Heart left ventricle (tissue), 16 donors: ENCODE measurements at regions of chr7 and their contacts with region 1.

Region 1: DNA sequence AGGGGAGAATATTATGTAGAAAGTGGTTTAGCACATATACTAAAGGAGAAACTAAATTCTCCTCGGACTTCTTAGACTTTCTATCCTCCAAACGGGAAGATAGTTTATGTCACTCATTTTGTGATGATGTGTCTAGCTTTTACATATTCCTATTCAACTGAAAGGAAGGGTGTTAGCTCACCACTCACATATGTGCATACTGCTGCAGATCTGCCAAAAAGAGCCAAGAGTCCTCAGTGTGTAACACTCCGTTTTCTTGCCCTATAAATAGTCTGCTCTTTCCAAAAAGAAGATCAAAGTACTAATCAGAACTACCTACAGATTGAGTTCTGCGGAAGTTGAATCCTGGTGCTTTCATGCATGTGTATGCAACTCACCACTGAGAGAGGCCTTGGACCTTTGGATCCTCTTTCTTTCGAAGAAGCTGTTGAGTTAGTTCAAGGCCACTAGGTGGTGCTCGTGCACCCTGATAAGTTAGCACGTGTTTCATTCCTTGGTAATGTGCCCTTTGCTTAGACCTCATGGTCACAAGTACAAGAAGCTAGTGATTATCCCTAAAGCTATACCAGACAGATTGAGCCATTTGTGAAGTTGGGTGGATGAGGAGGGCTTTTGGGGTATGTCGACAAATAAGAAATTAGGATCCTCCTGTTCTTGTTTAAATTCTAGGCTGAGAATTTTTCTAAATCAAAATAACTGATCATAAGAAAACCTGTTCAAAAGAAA is 14.1 kb downstream of the YAE1 start:
- DNase-seq: peak; percentile 67 to 84 (median 75)
- ATAC-seq: peak; percentile 74 to 95 (median 92)
- H3K4me3 ChIP-seq: no peak overlapping the region
- H3K27ac ChIP-seq: no peak overlapping the region
- H3K4me1 ChIP-seq: peaks cover 0 to 4% (median 0%) of the 10 kb centered on the region in 12 donors
- H3K27me3 ChIP-seq: no peaks in the 10 kb centered on the region
- CTCF ChIP-seq: peak; percentile 79 to 92 (median 86)
- POLR2A ChIP-seq: no peak

Region 2: DNA sequence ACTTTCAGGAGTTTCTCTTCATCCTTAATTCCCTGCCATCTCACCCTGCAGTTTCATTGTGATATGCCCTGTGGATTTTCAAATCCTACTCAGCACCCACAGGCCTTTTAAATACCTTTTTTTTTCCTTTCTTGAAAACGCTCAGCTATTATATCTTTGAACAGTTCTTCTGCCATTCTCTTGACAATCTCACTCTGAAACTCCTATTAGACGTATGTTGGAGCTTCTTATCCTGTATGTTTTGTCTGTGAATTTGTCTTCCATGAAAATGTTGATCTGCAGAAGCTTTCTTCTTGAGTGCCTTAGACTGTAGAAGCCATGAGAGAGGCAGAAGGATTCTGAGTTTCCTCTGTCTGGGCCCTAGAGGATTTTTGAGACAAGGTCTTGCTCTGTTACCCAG is 33.0 kb before region 1 on chr7:
- intact Hi-C with region 1: no loop called
- DNase-seq: no peak
- ATAC-seq: no peak
- H3K4me3 ChIP-seq: no peak overlapping the region
- H3K27ac ChIP-seq: no peak overlapping the region
- H3K4me1 ChIP-seq: no peaks in the 10 kb centered on the region
- H3K27me3 ChIP-seq: no peaks in the 10 kb centered on the region
- CTCF ChIP-seq: no peak
- POLR2A ChIP-seq: no peak

Region 3: DNA sequence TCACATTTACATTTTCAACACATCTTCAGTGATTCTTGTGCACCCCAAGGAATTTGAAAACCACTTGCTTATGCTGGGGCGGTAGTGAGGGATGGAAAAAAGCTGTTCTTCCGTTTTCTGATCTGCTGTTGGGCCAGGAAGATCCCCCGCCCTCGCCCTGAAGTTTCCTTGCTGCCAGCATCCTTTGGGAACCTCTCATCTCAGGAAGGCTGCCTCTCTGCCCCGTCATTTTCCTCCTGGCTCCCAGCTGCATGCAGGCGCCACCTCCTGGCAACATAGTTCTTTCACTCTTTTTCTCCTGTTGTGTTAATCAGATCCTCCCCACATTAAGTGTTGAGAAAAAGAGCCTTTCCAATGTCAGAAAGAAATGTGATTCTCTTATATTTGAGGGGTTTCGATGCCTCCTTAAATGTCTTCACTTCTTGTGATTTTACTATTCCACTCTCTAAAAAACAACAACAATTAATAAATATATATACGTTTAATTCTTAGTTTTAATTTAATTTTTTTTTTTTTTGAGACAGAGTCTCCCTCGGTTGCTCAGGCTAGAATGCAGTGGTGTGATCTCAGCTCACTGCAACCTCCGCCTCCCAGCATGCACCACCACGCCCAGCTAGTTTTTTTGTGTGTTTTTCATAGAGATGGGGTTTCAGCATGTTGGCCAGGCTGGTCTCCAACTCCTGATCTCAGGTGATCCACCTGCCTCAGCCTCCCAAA is 165.9 kb after region 1 on chr7:
- intact Hi-C with region 1: loop called (anchors 1 to 2 kb)
- DNase-seq: peak; percentile 74 to 80 (median 78)
- ATAC-seq: peak; percentile 58 to 92 (median 84)
- H3K4me3 ChIP-seq: no peak overlapping the region
- H3K27ac ChIP-seq: no peak overlapping the region
- H3K4me1 ChIP-seq: peaks cover 0 to 8% (median 0%) of the 10 kb centered on the region in 12 donors
- H3K27me3 ChIP-seq: no peaks in the 10 kb centered on the region
- CTCF ChIP-seq: peak; percentile 67 to 89 (median 80)
- POLR2A ChIP-seq: no peak

Region 4: DNA sequence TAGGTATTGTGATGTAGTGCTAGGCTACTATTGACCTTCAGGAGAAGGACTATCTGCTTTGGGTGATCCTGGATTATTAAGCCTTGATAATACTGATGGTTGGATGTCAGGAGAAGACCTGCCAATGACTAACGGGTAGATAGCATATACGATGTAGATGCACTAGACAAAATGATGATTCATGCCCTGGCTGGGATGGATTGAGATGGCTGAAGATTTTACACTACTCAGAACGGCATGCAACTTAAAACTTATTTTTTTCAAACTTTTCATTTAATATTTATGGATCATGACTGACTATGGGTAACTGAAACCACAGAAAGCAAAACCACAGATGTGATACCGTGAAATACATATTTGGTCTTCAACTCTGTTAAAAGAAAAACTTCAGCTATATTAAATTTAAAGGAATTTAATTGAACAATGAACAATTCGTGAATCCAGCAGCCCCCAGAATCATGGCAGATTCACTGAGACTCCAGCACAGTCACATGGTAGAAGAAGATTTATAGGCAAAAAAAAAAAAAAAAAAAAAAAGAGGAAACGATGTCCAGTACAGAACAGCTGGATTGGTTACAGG is 245.2 kb after region 1 on chr7:
- intact Hi-C with region 1: loop called in 1 of 10 experiments (anchors 5 kb)
- DNase-seq: no peak
- ATAC-seq: no peak
- H3K4me3 ChIP-seq: no peak overlapping the region
- H3K27ac ChIP-seq: no peak overlapping the region
- H3K4me1 ChIP-seq: no peaks in the 10 kb centered on the region
- H3K27me3 ChIP-seq: peaks cover 0 to 10% (median 0%) of the 10 kb centered on the region in 9 donors
- CTCF ChIP-seq: no peak
- POLR2A ChIP-seq: no peak

Region 5: DNA sequence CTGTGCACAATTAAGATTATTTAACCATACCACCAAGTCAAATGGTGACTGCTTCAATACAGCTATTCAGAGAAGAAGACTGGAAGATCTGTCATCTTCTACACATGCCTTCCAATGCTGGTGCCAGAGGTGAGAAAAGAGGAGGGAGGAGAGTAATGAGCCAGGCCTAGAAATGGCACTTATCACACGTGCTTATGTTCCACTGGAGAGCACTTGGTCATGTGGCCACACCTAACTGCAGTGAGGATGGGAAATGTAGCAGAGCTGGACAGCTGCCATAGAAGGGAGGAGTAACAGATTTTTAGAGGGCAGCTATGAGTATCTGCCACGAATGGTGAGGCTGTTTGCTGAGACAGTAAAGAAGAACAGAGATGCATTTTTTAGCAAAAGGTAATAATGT is 477.0 kb after region 1 on chr7:
- intact Hi-C with region 1: loop called in 3 of 10 experiments (anchors 5 to 10 kb)
- DNase-seq: peak in 4 of 5 donors; percentile 32 to 63 (median 42)
- ATAC-seq: peak; percentile 27 to 90 (median 76)
- H3K4me3 ChIP-seq: no peak overlapping the region
- H3K27ac ChIP-seq: no peak overlapping the region
- H3K4me1 ChIP-seq: peaks cover 0 to 28% (median 4%) of the 10 kb centered on the region in 12 donors
- H3K27me3 ChIP-seq: no peaks in the 10 kb centered on the region
- CTCF ChIP-seq: no peak
- POLR2A ChIP-seq: no peak